Activated CD4-positive, alpha-beta T cell treated with anti-CD3 and anti-CD28 coated beads for 36 hours (primary cell): ENCODE measurements at regions of chr6 and their contacts with region 1.

Region 1: DNA sequence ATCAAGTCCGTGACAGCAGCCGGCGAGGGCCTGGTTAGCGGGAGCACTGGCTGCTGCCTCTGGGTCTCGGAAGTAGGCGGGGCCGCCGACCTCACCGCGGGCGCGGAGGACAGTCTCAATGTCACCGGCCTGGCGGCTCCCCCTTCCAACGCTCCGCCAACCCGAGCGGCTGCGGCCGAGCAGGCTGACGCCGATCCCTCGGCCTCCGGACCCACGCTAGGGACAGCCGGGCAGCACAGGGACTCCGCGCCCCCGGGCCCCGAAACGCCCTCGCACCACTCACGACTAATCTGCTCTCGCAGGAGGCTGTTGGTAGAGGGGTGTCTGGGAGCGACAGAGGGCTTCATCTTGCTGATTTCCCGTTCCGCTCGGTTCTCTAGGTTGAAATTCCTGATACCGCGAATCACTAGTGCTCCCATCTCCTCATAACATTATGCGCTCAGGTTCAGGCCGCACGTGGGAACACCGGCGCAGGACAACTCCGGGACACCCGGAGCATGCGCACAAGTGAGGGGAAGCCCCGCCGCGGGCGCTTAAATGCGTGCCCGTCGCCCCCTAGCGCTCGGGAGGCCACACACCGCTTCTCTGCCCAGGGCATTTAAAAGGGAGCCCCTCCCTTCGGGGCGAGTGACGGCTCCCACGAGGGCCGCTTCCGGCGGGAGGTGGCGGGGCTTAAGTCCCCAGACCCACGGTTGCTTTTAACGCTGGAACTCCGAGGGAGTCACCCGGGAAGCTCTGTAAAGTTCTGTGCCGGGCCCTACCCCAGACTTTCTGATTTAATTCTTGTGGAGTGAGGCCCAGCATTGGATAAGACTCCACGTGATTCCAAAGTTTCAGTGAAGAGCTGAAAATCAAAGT is at the start of gene NDUFAF4:
- DNase-seq: peak; percentile 97
- ATAC-seq: peak; percentile 95
- H3K4me3 Mint-ChIP-seq: peak within 1 kb of the TSS; percentile 92
- H3K27ac Mint-ChIP-seq: peak within 1 kb of the TSS; percentile 97
- H3K4me1 Mint-ChIP-seq: peaks cover 34% of the 10 kb centered on the region
- H3K27me3 Mint-ChIP-seq: peaks cover 10% of the 10 kb centered on the region
- total RNA-seq, gene NDUFAF4: 65.4 to 84.6 TPM

Region 2: DNA sequence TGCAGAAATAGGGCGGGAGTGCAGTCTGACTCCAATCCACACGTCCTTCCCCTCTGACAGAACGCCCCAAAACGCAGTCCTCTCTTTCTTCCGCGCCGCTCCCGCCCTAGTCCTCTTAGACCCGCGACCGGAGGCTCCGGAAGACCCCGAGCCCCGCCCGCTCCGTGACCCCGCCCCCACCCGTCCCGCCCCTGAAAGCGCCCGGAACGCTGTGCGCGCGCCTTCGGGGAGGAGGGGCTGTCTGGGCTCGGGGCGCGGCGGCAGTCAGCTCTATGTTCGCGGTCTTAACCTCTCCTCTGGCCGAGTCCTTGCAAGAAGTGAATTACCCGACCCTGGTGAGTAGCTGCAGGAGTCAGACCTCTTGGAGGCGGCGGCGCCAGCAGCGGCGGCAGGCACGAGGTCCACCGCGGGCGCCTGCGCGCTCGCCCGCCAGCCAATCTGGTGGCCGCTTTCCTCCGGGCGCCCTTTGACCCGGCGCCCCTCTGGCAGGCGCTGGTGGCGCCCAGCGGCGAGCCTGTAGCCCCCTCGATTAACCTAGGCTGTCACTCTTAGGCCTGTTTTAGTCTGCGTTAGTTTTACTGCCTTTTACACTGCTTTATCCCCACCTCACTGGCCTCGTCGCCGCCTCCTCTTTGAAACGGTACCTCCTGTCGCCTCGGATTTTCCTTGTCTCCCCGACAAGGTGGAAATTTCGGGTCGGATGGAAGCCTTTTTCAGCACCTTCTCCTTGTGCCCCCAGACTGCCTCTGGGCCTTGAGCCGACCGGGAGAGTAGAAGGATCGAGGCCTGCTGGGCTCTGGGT is 1320.1 kb before region 1 on chr6 and contains the start of gene MANEA:
- CTCF ChIA-PET with region 1: no interaction called
- POLR2A ChIA-PET with region 1: no interaction called
- intact Hi-C with region 1: loop called (anchors 5 kb)
- DNase-seq: peak; percentile 92
- ATAC-seq: peak; percentile 92
- H3K4me3 Mint-ChIP-seq: peak within 1 kb of the TSS; percentile 81
- H3K27ac Mint-ChIP-seq: peak within 1 kb of the TSS; percentile 98
- H3K4me1 Mint-ChIP-seq: peaks cover 31% of the 10 kb centered on the region
- H3K27me3 Mint-ChIP-seq: no peaks in the 10 kb centered on the region
- total RNA-seq, gene MANEA: 19.6 to 22.4 TPM

Region 3: DNA sequence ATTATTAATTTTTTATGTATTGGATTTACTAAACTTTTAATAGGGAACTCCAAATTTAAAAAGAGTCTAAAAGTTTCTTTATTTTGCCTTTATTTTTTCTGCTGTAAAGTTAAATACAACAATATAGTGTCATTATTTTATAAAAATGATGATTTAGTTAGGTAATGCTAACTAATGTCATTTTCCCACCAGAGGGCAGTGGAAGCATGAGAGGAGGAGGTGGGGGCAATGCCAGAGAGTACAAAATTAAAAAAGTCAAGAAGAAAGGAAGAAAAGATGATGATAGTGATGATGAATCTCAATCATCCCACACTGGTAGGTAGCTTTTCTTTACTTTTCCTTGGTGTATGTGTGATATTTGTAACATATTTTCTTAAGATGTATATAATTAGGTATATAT is 354.9 kb before region 1 on chr6:
- CTCF ChIA-PET with region 1: no interaction called
- POLR2A ChIA-PET with region 1: no interaction called
- intact Hi-C with region 1: loop called in 1 of 2 experiments (anchors 5 kb)
- DNase-seq: no peak
- ATAC-seq: no peak
- H3K4me3 Mint-ChIP-seq: no peak overlapping the region
- H3K27ac Mint-ChIP-seq: no peak overlapping the region
- H3K4me1 Mint-ChIP-seq: no peaks in the 10 kb centered on the region
- H3K27me3 Mint-ChIP-seq: no peaks in the 10 kb centered on the region

Region 4: DNA sequence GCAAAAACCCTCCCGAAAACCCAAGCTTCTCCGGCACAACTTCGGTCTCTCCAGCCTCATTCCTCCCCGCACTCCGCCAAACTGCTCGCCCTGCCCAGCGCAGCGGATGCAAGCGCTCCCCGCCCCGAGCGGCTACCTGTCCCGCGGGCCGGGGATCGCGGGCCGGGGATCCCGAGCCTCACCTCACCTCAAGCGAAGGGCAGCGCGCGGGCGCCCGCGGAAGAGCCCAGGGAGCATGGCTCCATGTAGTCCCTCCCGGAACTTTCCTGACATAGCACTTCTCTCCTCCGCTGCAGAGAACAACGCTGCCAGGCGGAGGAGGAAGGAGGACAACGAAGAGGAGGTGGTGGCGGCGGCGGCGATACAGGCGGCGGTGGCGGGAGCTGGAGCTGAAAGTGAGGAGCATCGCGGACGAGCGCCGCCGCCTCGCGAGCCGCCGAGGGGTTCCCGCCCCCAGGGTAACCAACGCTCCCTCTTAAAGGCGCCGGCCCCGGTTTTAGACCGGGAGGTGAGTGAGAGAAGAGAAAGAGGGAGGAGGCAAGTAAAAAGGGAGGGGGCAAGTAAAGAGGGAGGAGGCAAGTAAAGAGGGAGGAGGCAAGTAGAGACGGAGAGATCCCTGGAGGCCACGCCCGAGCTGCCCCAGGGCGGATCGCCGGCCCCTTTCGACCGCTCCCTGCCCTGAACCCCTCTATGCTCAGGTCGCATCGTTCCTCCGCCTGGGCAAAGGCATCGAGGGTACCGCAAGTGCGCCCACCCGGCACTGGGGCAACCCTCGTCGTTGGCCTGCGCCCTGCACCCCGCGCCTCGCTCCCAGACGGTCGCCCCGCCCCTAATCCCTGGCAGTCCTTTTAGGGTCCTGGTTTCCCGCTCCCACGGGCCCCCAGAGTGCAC is 60.3 kb before region 1 on chr6 and contains the start of gene GPR63:
- CTCF ChIA-PET with region 1: no interaction called
- POLR2A ChIA-PET with region 1: no interaction called
- intact Hi-C with region 1: loop called (anchors 1 kb)
- DNase-seq: peak; percentile 88
- ATAC-seq: peak; percentile 99
- H3K4me3 Mint-ChIP-seq: peak within 1 kb of the TSS; percentile 86
- H3K27ac Mint-ChIP-seq: peak within 1 kb of the TSS; percentile 65
- H3K4me1 Mint-ChIP-seq: peaks cover 17% of the 10 kb centered on the region
- H3K27me3 Mint-ChIP-seq: peaks cover 32% of the 10 kb centered on the region
- total RNA-seq, gene GPR63: 1.2 to 1.3 TPM

Region 5: DNA sequence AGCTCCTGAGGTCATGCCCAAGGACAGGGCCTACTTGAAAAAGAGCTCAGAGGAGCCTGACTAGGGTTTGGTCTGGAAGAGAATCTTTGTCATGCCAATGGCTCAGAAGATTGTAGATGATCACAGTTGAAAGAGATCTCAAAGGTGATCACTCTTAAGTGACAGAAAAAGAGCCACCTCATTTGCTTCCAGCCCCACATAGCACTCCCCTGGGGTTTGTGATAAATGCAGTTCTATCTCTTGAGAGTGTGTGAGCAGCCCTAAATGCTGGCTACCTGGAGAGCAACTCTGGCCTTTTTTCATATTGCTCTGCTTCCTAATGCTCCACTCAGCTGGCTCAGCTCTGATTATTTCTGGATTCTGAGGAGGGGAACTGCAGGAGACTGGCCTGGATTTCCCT is 66.2 kb after region 1 on chr6:
- CTCF ChIA-PET with region 1: no interaction called
- POLR2A ChIA-PET with region 1: no interaction called
- intact Hi-C with region 1: no loop called
- DNase-seq: no peak
- ATAC-seq: no peak
- H3K4me3 Mint-ChIP-seq: no peak overlapping the region
- H3K27ac Mint-ChIP-seq: no peak overlapping the region
- H3K4me1 Mint-ChIP-seq: no peaks in the 10 kb centered on the region
- H3K27me3 Mint-ChIP-seq: no peaks in the 10 kb centered on the region

Region 6: GRCh38 chr6:97053643-97054411 is 156.2 kb after region 1 on chr6:
- CTCF ChIA-PET with region 1: interaction called, 24 read pairs
- POLR2A ChIA-PET with region 1: no interaction called
- intact Hi-C with region 1: loop called (anchors 1 to 2 kb)
- DNase-seq: no peak
- ATAC-seq: no peak
- H3K4me3 Mint-ChIP-seq: no peak overlapping the region
- H3K27ac Mint-ChIP-seq: no peak overlapping the region
- H3K4me1 Mint-ChIP-seq: peaks cover 15% of the 10 kb centered on the region
- H3K27me3 Mint-ChIP-seq: no peaks in the 10 kb centered on the region

Region 7: GRCh38 chr6:97282726-97283617 is 385.4 kb after region 1 on chr6 and contains the start of gene MMS22L:
- CTCF ChIA-PET with region 1: interaction called, 3 read pairs
- POLR2A ChIA-PET with region 1: no interaction called
- intact Hi-C with region 1: loop called in 1 of 2 experiments (anchors 1 kb)
- DNase-seq: peak; percentile 96
- ATAC-seq: peak; percentile 98
- H3K4me3 Mint-ChIP-seq: peak within 1 kb of the TSS; percentile 76
- H3K27ac Mint-ChIP-seq: peak within 1 kb of the TSS; percentile 79
- H3K4me1 Mint-ChIP-seq: peaks cover 23% of the 10 kb centered on the region
- H3K27me3 Mint-ChIP-seq: no peaks in the 10 kb centered on the region
- total RNA-seq, gene MMS22L: 33.9 to 43.6 TPM